ENCODE measurements at regions of chr21 and their contacts with region 1.

Region 1: GRCh38 chr21:38355992-38356797 is 99.4 kb downstream of the KCNJ15 start:
- DNase-seq: peak; percentile 48
- H3K4me3 Mint-ChIP-seq: no peak overlapping the region
- H3K27ac Mint-ChIP-seq: no peak overlapping the region
- H3K4me1 Mint-ChIP-seq: peaks cover 9% of the 10 kb centered on the region
- H3K27me3 Mint-ChIP-seq: peaks cover 10% of the 10 kb centered on the region

Region 2: GRCh38 chr21:37700641-37701202 is 655.5 kb before region 1 on chr21:
- intact Hi-C with region 1: loop called (anchors 1 kb)
- DNase-seq: no peak
- H3K4me3 Mint-ChIP-seq: no peak overlapping the region
- H3K27ac Mint-ChIP-seq: no peak overlapping the region
- H3K4me1 Mint-ChIP-seq: no peaks in the 10 kb centered on the region
- H3K27me3 Mint-ChIP-seq: peaks cover 6% of the 10 kb centered on the region

Region 3: DNA sequence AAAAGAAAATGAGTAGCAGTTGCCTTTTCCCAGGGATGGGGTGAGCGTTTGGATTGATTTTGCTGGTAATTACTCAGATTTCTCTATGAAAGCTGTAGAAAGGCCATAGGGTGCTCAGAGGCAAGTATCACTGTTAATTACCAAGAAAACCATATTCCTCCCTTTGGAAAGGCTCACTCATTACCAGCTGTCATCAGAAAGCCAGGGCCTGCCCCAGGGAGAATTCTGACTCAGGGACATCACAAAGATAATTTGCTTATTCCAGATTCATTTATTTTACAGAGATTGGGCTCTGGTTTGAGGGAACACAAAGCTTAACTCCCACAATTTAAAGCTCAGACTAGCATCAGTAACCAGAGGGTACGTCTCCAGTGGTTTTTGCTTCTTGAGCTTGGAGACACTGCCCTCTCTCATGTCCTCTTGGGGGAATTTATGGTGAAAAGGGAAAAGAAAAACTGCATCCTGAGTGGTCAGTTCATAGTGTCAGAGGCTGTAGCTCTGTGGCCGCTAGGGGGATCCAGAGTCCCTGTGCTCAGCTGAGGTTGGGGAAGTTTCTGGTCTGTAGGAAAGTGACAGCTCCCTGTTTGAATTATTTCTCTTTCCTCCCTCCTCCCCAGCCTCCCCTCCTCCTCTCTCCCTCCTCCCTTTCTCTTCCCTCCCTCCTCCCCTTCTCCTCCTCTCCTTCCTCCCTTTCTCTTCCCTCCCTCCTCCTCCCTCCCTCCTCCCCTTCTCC is 644.2 kb before region 1 on chr21:
- intact Hi-C with region 1: loop called (anchors 1 kb)
- DNase-seq: peak; percentile 25
- H3K4me3 Mint-ChIP-seq: no peak overlapping the region
- H3K27ac Mint-ChIP-seq: no peak overlapping the region
- H3K4me1 Mint-ChIP-seq: no peaks in the 10 kb centered on the region
- H3K27me3 Mint-ChIP-seq: peaks cover 7% of the 10 kb centered on the region

Region 4: DNA sequence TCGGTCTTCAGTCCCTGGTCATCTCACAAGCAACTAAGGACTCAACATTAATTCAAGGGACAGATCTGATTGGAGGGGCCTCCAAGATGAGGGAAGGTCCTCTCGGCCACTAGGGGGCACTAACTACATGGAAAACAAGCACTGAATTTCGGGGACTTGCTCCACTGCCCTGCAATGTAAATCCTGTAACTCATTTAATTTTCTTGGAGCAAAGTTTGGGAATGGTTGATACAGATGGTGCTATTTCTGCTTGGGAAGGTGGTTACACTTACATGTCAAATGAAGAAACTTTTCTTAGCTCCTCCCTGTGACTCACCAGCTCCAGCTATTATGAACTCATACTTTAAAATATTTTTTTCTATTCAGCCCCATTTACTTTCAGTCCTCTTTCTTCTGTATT is 196.8 kb before region 1 on chr21:
- intact Hi-C with region 1: loop called (anchors 1 kb)
- DNase-seq: peak; percentile 25
- H3K4me3 Mint-ChIP-seq: no peak overlapping the region
- H3K27ac Mint-ChIP-seq: no peak overlapping the region
- H3K4me1 Mint-ChIP-seq: no peaks in the 10 kb centered on the region
- H3K27me3 Mint-ChIP-seq: peaks cover 10% of the 10 kb centered on the region

Region 5: DNA sequence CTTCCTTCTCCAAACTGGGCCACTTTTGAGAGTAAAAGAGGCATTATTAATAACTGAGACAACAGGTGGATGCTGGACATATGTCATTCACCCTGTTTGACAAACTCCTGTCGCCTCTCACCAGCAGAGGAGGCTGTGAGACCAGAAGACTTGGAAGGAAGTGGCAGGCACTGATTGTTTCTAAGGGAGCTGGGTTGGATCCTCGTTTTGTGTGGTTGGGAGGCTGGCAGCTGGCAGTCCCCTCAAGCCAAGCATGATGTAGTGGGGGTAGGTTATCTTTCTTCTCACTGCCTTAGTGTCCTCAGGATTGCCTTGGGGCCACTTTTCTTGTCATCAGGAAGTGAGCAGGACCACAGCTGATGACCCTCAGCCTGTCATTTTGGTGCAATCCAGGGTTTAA is 185.9 kb before region 1 on chr21:
- intact Hi-C with region 1: loop called (anchors 1 kb)
- DNase-seq: no peak
- H3K4me3 Mint-ChIP-seq: no peak overlapping the region
- H3K27ac Mint-ChIP-seq: no peak overlapping the region
- H3K4me1 Mint-ChIP-seq: no peaks in the 10 kb centered on the region
- H3K27me3 Mint-ChIP-seq: no peaks in the 10 kb centered on the region

Region 6: DNA sequence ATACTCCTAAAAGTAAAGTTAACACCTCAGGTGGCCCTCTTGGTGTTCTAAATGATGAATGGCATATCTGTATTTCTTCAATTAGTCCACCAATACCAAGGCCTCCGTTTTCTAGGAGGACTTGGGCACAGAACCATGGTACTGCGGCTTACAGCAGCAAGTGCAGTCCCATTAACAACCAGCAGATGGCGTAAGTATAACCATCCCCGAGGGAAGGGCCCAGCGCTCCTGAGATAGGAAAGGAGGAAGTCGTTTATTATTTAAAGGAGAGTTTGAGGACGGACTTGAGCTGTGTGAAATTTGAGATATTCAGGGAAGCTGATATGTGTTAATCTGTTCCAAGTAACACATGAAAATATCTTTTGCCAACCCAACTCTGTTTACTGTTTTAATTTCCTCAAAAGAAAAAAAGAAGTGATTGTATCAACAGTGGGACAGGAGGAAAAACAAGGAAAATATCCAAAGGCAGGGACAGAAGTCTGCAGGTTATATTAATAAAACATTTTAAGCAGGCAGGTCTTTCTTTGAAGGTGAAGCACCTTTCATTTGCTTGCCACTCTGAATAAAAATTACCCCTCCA is 137.1 kb before region 1 on chr21:
- intact Hi-C with region 1: loop called (anchors 1 kb)
- DNase-seq: peak; percentile 31
- H3K4me3 Mint-ChIP-seq: no peak overlapping the region
- H3K27ac Mint-ChIP-seq: peak overlapping the region; percentile 45
- H3K4me1 Mint-ChIP-seq: peaks cover 8% of the 10 kb centered on the region
- H3K27me3 Mint-ChIP-seq: peaks cover 2% of the 10 kb centered on the region

Region 7: GRCh38 chr21:38404168-38404567 is 48.0 kb after region 1 on chr21:
- intact Hi-C with region 1: no loop called
- DNase-seq: no peak
- H3K4me3 Mint-ChIP-seq: no peak overlapping the region
- H3K27ac Mint-ChIP-seq: no peak overlapping the region
- H3K4me1 Mint-ChIP-seq: no peaks in the 10 kb centered on the region
- H3K27me3 Mint-ChIP-seq: peaks cover 13% of the 10 kb centered on the region